Activated CD8-positive, alpha-beta T cell treated with anti-CD3 and anti-CD28 coated beads, Interleukin-2, amount 10 ng/mL, durations not matched to agents 7 days and 5 days (primary cell): ENCODE measurements at regions of chr20 and their contacts with region 1.

Region 1: DNA sequence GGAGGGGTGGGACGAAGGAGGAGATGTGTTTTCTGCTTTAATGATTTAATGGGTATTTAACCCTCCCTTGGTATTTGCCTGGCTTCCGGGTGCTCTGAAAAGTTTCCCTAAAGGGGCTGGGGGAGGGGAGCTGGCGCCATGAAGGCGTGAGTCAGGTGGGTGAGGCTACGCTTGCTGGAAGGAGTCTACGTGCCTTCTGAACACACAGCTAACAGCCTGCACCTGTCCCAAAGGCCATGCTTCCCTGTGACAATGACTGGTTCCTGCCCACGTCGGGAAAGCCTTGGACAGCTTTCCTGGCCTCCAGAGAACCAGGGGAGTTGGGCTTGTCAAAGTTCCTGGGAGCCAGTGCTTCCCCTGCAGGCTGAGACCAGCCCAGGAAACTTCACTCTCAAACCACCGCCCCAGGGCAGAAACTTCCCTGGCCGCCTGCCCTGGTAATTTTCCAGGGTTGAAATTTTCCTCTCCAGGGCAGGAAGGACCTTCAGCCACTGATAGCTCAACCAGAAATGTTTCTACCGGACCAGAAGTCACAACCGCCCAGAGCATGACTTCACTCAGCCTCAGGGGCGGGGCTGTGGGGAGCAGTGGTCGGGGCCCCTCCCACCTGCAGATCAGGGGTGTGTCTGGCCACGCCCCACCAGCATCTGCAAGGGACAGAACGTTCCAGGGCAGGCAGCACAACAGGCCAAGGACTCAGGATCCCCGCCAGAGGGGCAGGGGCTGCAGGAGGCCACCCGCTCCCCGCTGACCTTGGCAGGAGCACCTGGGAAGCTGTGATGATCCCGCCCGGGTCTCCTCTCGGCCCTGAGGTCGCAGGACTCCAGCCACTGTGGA is 18.6 kb upstream of the SLCO4A1 start:
- DNase-seq: peak; percentile 96
- ATAC-seq: peak; percentile 95
- H3K4me3 Mint-ChIP-seq: peak overlapping the region; percentile 73
- H3K27ac Mint-ChIP-seq: peak overlapping the region; percentile 95
- H3K4me1 Mint-ChIP-seq: peaks cover 50% of the 10 kb centered on the region
- H3K27me3 Mint-ChIP-seq: no peaks in the 10 kb centered on the region

Region 2: DNA sequence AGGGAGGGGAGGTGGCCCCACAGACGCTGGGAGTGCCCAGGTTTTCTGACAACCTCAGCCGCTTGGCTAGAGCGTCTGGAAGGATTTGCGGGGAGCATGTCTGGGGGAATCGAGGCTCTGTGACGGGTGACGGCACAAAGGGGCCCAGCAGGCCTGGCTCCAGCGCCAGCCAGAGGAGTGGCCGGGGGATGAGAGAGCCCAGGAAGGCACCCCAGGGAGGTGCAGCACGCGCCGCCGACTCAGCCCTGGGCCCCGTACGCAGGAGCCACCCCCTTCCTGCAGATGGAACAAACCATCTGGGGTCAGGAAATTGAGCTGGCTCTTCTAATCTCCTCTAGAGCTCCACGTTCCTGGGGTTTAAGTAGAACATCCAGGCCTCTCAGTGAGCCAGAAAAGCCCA is 12.7 kb after region 1 on chr20:
- CTCF ChIA-PET with region 1: interaction called, 10 read pairs
- POLR2A ChIA-PET with region 1: interaction called, 18 read pairs
- DNase-seq: peak; percentile 57
- ATAC-seq: peak; percentile 75
- H3K4me3 Mint-ChIP-seq: peak overlapping the region; percentile 15
- H3K27ac Mint-ChIP-seq: peak overlapping the region; percentile 55
- H3K4me1 Mint-ChIP-seq: peaks cover 37% of the 10 kb centered on the region
- H3K27me3 Mint-ChIP-seq: peaks cover 20% of the 10 kb centered on the region

Region 3: GRCh38 chr20:62642040-62642665 is 18.4 kb after region 1 on chr20 and contains the start of gene SLCO4A1:
- CTCF ChIA-PET with region 1: interaction called, 10 read pairs
- POLR2A ChIA-PET with region 1: interaction called, 18 read pairs
- DNase-seq: peak; percentile 92
- ATAC-seq: peak; percentile 86
- H3K4me3 Mint-ChIP-seq: peak within 1 kb of the TSS; percentile 88
- H3K27ac Mint-ChIP-seq: peak within 1 kb of the TSS; percentile 91
- H3K4me1 Mint-ChIP-seq: peaks cover 48% of the 10 kb centered on the region
- H3K27me3 Mint-ChIP-seq: peaks cover 8% of the 10 kb centered on the region
- total RNA-seq, gene SLCO4A1: 79.4 to 79.9 TPM

Region 4: GRCh38 chr20:62768481-62769287 is 145.0 kb after region 1 on chr20:
- CTCF ChIA-PET with region 1: no interaction called
- POLR2A ChIA-PET with region 1: no interaction called
- DNase-seq: no peak
- ATAC-seq: no peak
- H3K4me3 Mint-ChIP-seq: no peak overlapping the region
- H3K27ac Mint-ChIP-seq: no peak overlapping the region
- H3K4me1 Mint-ChIP-seq: peaks cover 3% of the 10 kb centered on the region
- H3K27me3 Mint-ChIP-seq: no peaks in the 10 kb centered on the region

Region 5: DNA sequence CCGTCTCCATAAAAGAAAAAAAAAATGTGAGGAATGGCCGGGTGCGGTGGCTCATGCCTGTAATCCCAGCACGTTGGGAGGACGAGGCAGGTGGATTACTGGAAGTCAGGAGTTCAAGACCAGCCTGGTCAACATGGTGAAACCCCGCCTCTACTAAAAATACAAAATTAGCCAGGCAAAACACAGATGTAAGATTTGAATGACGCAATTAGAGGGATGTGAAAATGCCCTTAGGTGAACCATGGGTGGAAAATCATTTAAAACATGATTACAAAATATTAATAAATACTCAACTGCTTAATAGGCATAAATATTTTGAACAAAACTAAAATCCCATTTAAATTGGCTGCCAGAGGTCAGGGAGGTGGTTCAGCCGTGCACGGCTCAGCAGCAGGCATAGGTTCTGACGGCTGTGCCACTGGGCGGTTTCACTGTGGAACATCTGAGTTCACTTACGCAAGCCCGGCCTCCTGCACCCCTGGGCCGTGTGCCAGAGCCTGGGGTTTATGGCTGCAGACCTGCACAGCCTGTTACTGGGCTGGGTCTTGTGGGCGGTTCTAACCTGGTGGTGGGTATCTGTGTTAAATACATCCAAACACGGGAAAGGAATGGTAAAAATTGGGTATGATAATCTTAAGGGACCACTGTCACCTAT is 214.2 kb after region 1 on chr20:
- CTCF ChIA-PET with region 1: no interaction called
- POLR2A ChIA-PET with region 1: no interaction called
- DNase-seq: no peak
- ATAC-seq: no peak
- H3K4me3 Mint-ChIP-seq: no peak overlapping the region
- H3K27ac Mint-ChIP-seq: no peak overlapping the region
- H3K4me1 Mint-ChIP-seq: no peaks in the 10 kb centered on the region
- H3K27me3 Mint-ChIP-seq: no peaks in the 10 kb centered on the region